CD4-positive, alpha-beta T cell (primary cell): ENCODE measurements at regions of chr5 and their contacts with region 1.

Region 1: DNA sequence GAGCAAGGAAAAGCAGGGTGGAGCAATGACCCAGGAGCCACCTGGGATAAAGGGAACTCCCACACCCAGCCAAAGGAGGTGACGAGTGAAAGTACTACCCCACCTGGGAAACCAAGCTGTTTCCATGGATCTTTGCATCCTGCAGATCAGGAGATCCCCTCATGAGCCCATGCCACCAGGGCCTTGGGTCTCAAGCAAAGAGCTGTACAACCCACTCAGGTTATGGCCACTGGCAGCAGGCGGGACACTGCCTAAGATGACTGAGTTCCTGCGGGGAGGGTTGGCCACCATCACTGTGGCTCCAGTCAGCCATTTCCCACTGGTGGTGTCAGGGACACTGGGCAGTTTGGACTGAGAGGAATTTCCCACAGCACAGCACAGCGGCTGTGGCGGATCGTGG is 225.7 kb downstream of the CDH9 start:
- DNase-seq: no peak
- ATAC-seq: no peak
- H3K4me3 ChIP-seq: no peak overlapping the region
- H3K4me3 Mint-ChIP-seq: no peak overlapping the region
- H3K27ac ChIP-seq: no peak overlapping the region
- H3K27ac Mint-ChIP-seq: no peak overlapping the region
- H3K4me1 ChIP-seq: no peaks in the 10 kb centered on the region
- H3K4me1 Mint-ChIP-seq: no peaks in the 10 kb centered on the region
- H3K27me3 ChIP-seq: no peaks in the 10 kb centered on the region
- H3K27me3 Mint-ChIP-seq: no peaks in the 10 kb centered on the region
- CTCF ChIP-seq: no peak

Region 2: DNA sequence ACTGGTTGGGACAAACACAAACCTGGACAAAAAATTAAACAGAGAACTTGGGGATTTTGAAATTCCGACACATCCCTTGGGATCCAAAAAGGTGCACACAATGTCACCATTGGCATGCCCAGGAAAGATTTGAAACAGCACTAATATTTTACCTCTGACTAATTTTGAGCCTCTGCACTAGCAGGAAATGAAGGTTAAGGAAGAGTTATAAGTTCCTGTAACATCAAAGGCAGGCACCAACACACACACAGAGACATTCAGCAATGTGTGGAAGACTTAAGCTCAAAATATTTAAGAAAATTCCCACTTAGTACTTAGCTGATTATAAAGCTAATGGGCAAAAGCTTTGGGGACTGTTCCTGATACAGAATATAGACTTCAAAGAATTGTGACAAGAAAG is 21.3 kb before region 1 on chr5:
- CTCF ChIA-PET with region 1: no interaction called
- POLR2A ChIA-PET with region 1: no interaction called
- intact Hi-C with region 1: loop called in 1 of 2 experiments (anchors 1 kb)
- DNase-seq: no peak
- ATAC-seq: no peak
- H3K4me3 ChIP-seq: no peak overlapping the region
- H3K4me3 Mint-ChIP-seq: no peak overlapping the region
- H3K27ac ChIP-seq: no peak overlapping the region
- H3K27ac Mint-ChIP-seq: no peak overlapping the region
- H3K4me1 ChIP-seq: no peaks in the 10 kb centered on the region
- H3K4me1 Mint-ChIP-seq: no peaks in the 10 kb centered on the region
- H3K27me3 ChIP-seq: no peaks in the 10 kb centered on the region
- H3K27me3 Mint-ChIP-seq: no peaks in the 10 kb centered on the region
- CTCF ChIP-seq: no peak